ENCODE measurements at regions of chr14 and their contacts with region 1.

Region 1: GRCh38 chr14:21383848-21384493 is at the start of gene SUPT16H:
- DNase-seq: peak; percentile 78 to 91 (median 86)
- ATAC-seq: peak; percentile 97
- H3K4me3 ChIP-seq: peak within 1 kb of the TSS; percentile 98
- H3K4me3 Mint-ChIP-seq: peak within 1 kb of the TSS; percentile 92 to 99 (median 97)
- H3K27ac ChIP-seq: peak within 1 kb of the TSS; percentile 87
- H3K27ac Mint-ChIP-seq: peak within 1 kb of the TSS; percentile 97 to 100 (median 99)
- H3K4me1 ChIP-seq: peaks cover 3 to 11% of the 10 kb centered on the region in 2 donors
- H3K4me1 Mint-ChIP-seq: peaks cover 26 to 52% (median 45%) of the 10 kb centered on the region in 7 donors
- H3K27me3 ChIP-seq: no peaks in the 10 kb centered on the region
- H3K27me3 Mint-ChIP-seq: no peaks in the 10 kb centered on the region
- total RNA-seq, gene SUPT16H: 46.1 to 104 (median 78.6) TPM

Region 2: GRCh38 chr14:20461274-20462001 is 922.5 kb before region 1 on chr14 and contains the start of gene PIP4P1:
- CTCF ChIA-PET with region 1: no interaction called
- POLR2A ChIA-PET with region 1: no interaction called
- intact Hi-C with region 1: loop called in 1 of 2 experiments (anchors 1 kb)
- DNase-seq: peak; percentile 95 to 100 (median 99)
- ATAC-seq: peak; percentile 92
- H3K4me3 ChIP-seq: peak within 1 kb of the TSS; percentile 83
- H3K4me3 Mint-ChIP-seq: peak within 1 kb of the TSS; percentile 81 to 97 (median 92)
- H3K27ac ChIP-seq: peak within 1 kb of the TSS; percentile 96
- H3K27ac Mint-ChIP-seq: peak within 1 kb of the TSS; percentile 88 to 99 (median 92)
- H3K4me1 ChIP-seq: peaks cover 20 to 21% of the 10 kb centered on the region in 2 donors
- H3K4me1 Mint-ChIP-seq: peaks cover 18 to 36% (median 32%) of the 10 kb centered on the region in 7 donors
- H3K27me3 ChIP-seq: no peaks in the 10 kb centered on the region
- H3K27me3 Mint-ChIP-seq: peaks cover 0 to 2% (median 0%) of the 10 kb centered on the region in 5 donors
- total RNA-seq, gene PIP4P1: 34.9 to 87.1 (median 74.2) TPM

Region 3: GRCh38 chr14:21241218-21241819 is 142.7 kb before region 1 on chr14:
- CTCF ChIA-PET with region 1: interaction called, 3 read pairs
- POLR2A ChIA-PET with region 1: interaction called, 3 read pairs
- intact Hi-C with region 1: loop called in 1 of 2 experiments (anchors 1 kb)
- DNase-seq: peak in 2 of 9 donors; percentile 38 to 49
- ATAC-seq: no peak
- H3K4me3 ChIP-seq: no peak overlapping the region
- H3K4me3 Mint-ChIP-seq: no peak overlapping the region
- H3K27ac ChIP-seq: no peak overlapping the region
- H3K27ac Mint-ChIP-seq: peak overlapping the region in 8 of 9 donors; percentile 3 to 88 (median 70)
- H3K4me1 ChIP-seq: peaks cover 44% of the 10 kb centered on the region in 2 donors
- H3K4me1 Mint-ChIP-seq: peaks cover 36 to 85% (median 60%) of the 10 kb centered on the region in 7 donors
- H3K27me3 ChIP-seq: no peaks in the 10 kb centered on the region
- H3K27me3 Mint-ChIP-seq: no peaks in the 10 kb centered on the region

Region 4: DNA sequence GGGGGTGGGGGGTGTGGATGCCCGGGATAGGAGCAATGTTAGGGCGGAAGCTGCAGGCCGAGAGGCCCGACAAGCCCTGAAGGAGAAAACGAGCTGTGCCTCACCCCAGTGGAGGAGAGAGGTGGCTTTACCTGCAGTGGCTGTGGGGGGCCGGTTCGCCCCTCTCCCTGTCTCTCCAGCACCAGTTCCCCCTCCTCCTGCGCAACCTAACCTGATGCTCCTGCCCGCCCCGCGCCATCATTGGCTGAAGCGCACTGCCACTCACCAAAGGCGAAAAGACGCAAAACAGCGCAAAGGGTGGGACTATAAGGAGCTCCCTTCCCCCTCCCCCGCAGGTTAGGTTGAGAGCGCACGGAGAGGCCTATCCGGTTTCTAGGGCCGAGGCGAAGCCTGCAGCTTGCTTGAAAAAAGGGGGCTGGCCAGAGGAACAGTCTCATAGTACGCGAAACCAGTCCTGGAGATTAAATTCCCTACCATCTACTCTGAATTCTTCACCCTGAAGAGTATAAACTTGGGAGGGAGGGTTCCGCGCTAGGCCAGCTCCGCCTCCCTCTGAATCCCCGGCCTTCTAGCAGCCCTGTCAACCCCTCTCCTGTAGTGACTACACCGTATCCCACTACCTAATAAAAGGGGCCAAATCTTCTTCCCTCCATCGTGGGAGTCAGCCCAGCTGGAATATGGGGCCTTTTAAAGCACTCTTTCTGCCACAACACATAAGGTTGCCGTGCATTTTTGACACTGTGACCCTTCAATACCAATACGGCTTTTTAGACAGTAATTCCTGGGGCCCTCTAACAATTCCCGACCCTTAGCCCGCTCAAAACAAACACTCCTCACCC is 53.3 kb after region 1 on chr14:
- CTCF ChIA-PET with region 1: no interaction called
- POLR2A ChIA-PET with region 1: interaction called, 7 read pairs
- intact Hi-C with region 1: loop called (anchors 1 kb)
- DNase-seq: peak; percentile 93 to 100 (median 99)
- ATAC-seq: peak; percentile 100
- H3K4me3 ChIP-seq: peak overlapping the region; percentile 87
- H3K4me3 Mint-ChIP-seq: peak overlapping the region; percentile 86 to 97 (median 92)
- H3K27ac ChIP-seq: peak overlapping the region; percentile 94
- H3K27ac Mint-ChIP-seq: peak overlapping the region; percentile 90 to 98 (median 94)
- H3K4me1 ChIP-seq: peaks cover 13 to 22% of the 10 kb centered on the region in 2 donors
- H3K4me1 Mint-ChIP-seq: peaks cover 43 to 86% (median 68%) of the 10 kb centered on the region in 7 donors
- H3K27me3 ChIP-seq: no peaks in the 10 kb centered on the region
- H3K27me3 Mint-ChIP-seq: no peaks in the 10 kb centered on the region

Region 5: DNA sequence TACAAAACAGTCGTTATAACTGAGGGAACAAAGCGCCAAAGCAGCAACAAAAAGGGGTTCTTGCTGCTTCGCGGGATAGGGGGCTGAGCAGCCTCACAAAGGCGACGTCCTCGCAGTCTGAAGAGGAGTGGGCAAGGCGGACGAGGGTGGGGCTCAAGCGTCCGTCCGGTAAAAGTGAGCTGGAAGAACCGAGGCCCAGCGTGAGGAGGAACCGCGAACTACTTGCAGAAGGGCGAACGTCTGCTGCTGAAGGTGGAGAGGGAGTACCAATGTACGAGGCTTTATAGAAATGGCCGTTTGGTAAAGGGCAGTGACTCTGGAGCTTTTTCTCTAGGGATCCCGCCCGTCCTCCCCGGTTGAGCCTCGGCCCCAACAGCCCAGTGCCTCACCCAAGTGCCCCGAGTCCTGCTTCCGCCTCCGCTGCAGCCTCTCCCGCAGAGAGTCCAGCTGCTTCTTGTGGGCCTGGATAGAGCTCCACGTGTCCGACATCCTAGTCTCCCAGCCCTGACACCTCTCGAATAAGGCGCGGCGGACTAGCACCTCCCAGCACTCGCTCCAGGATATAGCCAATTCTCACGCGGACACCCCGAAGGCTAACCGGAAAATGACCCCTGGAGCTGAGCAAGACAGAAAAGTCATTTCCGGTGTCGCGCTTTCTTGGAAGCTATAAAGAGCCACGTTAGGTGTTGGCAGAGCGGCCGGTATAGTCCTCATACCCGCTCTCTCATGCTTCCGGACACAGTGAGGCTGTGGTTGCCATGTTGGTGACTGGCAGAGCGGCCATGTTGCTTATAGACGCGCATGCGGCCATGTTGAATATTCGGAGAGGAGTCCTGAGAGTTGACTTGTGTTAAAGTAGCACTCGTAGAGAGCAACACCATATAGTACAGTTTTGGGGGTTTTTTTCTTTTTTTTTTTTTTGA is 127.0 kb after region 1 on chr14 and contains the start of gene METTL3:
- CTCF ChIA-PET with region 1: no interaction called
- POLR2A ChIA-PET with region 1: interaction called, 10 read pairs
- intact Hi-C with region 1: loop called (anchors 1 kb)
- DNase-seq: peak; percentile 78 to 95 (median 90)
- ATAC-seq: peak; percentile 100
- H3K4me3 ChIP-seq: peak within 1 kb of the TSS; percentile 94
- H3K4me3 Mint-ChIP-seq: peak within 1 kb of the TSS; percentile 92 to 100 (median 99)
- H3K27ac ChIP-seq: peak within 1 kb of the TSS; percentile 87
- H3K27ac Mint-ChIP-seq: peak within 1 kb of the TSS; percentile 97 to 99 (median 98)
- H3K4me1 ChIP-seq: peaks cover 15 to 21% of the 10 kb centered on the region in 2 donors
- H3K4me1 Mint-ChIP-seq: peaks cover 20 to 47% (median 42%) of the 10 kb centered on the region in 7 donors
- H3K27me3 ChIP-seq: no peaks in the 10 kb centered on the region
- H3K27me3 Mint-ChIP-seq: peaks cover 0 to 1% (median 0%) of the 10 kb centered on the region in 5 donors
- total RNA-seq, gene METTL3: 43.6 to 108 (median 75.3) TPM

Measured in naive thymus-derived CD4-positive, alpha-beta T cell (primary cell).